Activated T-helper 1 cell treated with anti-CD3 and anti-CD28 coated beads, Interleukin-12 subunit alpha, Interleukin-12 subunit beta, Interleukin-2, Interleukin-4 antibody, amounts not matched to agents 30 ng/mL and 10 ng/mL and 1 ng/mL, durations not matched to agents 14 hours and 24 hours and 36 hours (primary cell): ENCODE measurements at regions of chr1 and their contacts with region 1.

Region 1: DNA sequence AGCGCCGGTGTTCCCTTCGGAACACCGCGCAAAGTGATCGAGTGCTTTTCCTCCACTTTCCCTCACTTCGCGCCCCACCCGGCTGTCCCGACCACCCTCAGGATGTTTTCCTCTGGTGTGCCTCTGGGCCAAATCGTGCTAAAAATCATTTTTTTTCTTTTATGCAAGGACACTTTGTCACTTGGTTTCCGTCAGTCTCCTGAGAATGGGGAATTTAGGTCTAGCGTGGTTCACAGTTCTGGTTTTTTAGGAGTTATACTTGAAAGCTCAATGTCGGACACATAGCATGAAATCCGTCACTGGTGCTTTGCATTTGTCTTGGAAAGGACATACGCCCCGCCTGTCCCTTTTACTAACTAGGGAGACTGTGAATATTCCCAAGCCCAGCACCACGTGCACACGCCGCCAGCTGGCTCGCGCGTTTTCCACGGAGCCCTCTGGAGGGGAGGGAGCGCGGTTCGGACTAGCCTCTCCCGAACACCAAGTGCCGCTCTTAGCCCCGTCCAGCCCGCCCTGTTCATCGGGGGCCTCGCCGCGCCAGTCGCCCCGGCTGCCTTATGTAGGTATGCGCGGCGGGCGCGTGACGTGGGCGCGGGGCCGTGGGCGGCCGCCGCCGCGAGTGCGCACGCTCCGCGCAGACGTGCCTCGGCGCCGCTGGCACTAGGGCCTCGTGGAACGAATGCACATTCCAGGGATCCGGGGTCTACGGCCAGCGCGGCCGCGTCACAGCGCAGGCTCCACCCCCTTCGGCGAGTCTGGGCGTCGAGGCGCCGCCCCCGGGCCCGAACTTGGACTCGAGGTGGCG is 572 bp upstream of the IRF2BP2 start:
- DNase-seq: peak; percentile 90
- H3K4me3 Mint-ChIP-seq: peak overlapping the region; percentile 92
- H3K27ac Mint-ChIP-seq: peak overlapping the region; percentile 99
- H3K4me1 Mint-ChIP-seq: peaks cover 49% of the 10 kb centered on the region
- H3K27me3 Mint-ChIP-seq: no peaks in the 10 kb centered on the region

Region 2: DNA sequence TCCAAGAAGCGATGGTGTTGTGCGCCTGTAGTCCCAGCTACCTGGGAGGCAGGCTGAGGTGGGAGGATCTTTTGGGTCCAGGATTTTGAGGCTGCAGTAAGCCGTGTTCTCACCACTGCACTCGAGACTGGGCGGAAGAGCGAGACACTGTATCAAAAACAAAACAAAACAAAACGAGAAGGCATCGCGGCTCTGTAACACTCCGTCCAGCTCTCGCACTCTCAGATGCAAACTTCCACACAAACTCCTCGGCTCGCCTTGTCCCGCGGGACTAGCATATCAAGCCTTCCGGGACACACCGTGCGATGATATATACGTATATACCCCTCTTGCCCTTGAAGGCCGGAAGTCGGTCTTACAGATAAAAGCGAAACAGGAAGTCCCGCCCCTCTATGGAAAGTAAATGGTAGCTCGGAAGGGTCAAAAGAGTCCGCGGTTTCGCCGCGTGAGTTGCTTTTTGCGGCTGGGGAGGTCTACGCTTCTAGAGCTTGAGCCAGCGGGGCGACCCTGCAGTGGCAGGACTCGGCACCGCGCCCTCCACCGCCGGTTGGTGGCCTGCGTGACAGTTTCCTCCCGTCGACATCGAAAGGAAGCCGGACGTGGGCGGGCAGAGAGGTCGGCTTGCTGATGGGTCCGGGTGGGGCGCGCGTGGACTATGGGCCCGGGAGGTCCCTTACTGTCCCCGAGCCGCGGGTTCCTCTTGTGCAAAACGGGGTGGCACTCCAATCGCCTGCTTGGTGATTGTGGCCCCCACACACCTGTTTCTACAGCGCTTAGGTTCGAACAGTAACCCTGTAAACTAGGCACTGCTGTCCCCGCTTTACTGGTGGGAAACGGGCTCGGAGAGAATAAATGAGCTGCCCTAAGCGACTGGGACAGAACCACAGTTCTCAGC is 237.2 kb before region 1 on chr1 and contains the start of gene COA6:
- intact Hi-C with region 1: loop called (anchors 2 kb)
- DNase-seq: peak; percentile 85
- H3K4me3 Mint-ChIP-seq: peak within 1 kb of the TSS; percentile 97
- H3K27ac Mint-ChIP-seq: peak within 1 kb of the TSS; percentile 96
- H3K4me1 Mint-ChIP-seq: peaks cover 57% of the 10 kb centered on the region
- H3K27me3 Mint-ChIP-seq: peaks cover 2% of the 10 kb centered on the region
- total RNA-seq, gene COA6: 57.2 and 66.9 TPM in 2 replicates

Region 3: GRCh38 chr1:234495211-234495990 is 115.1 kb before region 1 on chr1:
- intact Hi-C with region 1: no loop called
- DNase-seq: no peak
- H3K4me3 Mint-ChIP-seq: peak overlapping the region; percentile 47
- H3K27ac Mint-ChIP-seq: peak overlapping the region; percentile 93
- H3K4me1 Mint-ChIP-seq: peaks cover 76% of the 10 kb centered on the region
- H3K27me3 Mint-ChIP-seq: no peaks in the 10 kb centered on the region

Region 4: DNA sequence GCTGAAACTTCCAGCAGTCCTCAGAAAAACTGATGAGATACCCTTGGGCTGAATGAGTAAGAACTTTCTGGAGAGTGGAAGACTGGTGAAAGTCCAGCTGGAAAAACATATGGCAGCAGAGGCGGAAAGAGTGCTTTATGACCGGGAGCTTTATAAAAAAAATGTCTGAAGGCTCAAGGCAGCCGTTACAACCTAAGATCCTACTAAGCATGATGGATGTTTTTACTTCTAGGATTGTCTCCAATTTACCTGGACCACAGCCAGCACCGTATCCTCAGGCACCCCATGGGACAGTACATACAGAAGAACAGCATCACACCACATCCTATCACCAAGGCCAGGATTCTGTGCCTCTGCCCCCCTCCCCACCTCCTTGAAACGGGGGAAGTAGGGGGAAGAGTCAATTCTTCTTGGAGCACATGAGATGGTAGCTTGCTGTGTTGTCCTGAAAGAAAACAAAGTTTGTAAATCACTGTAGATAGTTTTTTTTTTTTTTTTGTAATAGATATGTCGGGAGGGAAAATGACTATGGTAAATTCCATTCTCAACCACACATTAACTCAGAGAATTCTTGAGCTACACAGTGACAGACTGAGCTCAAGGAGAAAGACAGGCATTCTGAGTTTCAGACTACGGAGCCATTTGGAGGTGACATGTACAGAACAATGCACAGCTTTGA is 11.2 kb after region 1 on chr1:
- intact Hi-C with region 1: no loop called
- DNase-seq: no peak
- H3K4me3 Mint-ChIP-seq: no peak overlapping the region
- H3K27ac Mint-ChIP-seq: no peak overlapping the region
- H3K4me1 Mint-ChIP-seq: peaks cover 14% of the 10 kb centered on the region
- H3K27me3 Mint-ChIP-seq: no peaks in the 10 kb centered on the region

Region 5: DNA sequence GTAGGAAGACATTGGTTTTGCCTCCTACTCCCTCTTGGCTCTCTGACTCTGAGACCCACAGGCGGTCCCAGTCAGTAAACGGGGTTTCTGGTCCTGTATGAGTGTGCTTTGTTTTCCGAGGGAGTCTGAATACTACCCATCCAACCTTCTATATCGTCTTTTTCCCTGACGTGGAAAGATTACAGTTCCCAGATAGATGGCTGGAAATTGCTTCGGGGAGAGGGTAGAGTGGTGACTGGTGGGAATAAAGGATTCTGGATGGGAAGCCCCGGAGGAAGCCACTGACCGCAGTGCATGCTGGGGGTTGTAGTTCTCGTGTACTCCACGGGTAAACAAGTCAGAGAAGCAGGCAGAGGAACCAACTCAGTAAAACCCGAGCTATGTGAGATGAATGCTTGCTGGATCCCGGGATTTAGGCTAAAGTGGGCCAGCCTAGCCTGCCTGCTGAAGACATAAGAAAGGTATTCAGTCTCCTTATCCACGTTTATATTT is 65.6 kb after region 1 on chr1:
- intact Hi-C with region 1: loop called (anchors 2 kb)
- DNase-seq: peak; percentile 40
- H3K4me3 Mint-ChIP-seq: peak overlapping the region; percentile 82
- H3K27ac Mint-ChIP-seq: peak overlapping the region; percentile 71
- H3K4me1 Mint-ChIP-seq: peaks cover 14% of the 10 kb centered on the region
- H3K27me3 Mint-ChIP-seq: peaks cover 5% of the 10 kb centered on the region

Region 6: GRCh38 chr1:234842726-234843641 is 232.4 kb after region 1 on chr1:
- intact Hi-C with region 1: loop called (anchors 1 kb)
- DNase-seq: peak; percentile 67
- H3K4me3 Mint-ChIP-seq: peak overlapping the region; percentile 54
- H3K27ac Mint-ChIP-seq: peak overlapping the region; percentile 90
- H3K4me1 Mint-ChIP-seq: peaks cover 96% of the 10 kb centered on the region
- H3K27me3 Mint-ChIP-seq: peaks cover 3% of the 10 kb centered on the region

Region 7: DNA sequence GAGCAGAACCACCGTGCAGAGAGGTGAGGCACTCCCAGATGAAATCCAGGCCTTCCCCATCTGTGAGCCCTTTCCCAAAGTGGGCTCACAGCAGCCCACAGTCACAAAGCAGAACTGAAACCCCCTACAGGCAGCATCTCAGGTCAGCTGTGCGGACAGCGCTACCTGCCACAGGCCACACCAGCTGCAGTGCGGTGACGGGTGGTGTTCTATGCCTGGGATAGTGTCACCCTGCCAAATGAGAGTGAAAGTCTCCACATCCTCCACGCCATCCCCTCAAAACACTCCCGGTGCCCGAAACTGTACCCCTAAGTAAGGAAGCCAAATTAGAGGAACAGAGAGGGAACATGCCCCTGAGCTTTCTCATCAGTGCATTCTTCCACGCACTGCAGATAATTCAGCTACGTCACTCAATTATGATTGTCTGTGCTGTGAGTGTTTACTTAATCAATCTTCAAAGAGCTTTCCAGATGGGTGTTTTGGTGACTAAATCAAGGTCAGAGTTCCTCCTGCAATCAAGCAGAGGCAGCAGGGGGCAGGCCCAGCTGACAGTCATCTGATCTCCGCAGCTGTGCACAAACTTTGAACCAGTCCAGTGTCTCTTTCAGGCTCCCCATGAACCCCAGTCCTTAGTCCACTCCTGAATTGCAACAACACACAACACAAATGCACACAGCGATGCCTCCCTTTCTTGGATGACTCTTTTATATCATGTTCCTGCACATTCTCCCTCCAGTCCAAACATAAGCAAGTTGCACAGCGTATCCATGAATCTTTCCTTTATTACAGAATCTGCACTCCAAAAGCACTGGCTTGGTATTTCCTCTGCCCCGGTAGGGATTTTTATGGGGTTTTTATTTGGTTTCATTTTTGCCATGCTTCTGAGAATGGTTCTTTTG is 368.1 kb after region 1 on chr1:
- intact Hi-C with region 1: loop called (anchors 1 kb)
- DNase-seq: no peak
- H3K4me3 Mint-ChIP-seq: peak overlapping the region; percentile 83
- H3K27ac Mint-ChIP-seq: peak overlapping the region; percentile 92
- H3K4me1 Mint-ChIP-seq: peaks cover 88% of the 10 kb centered on the region
- H3K27me3 Mint-ChIP-seq: no peaks in the 10 kb centered on the region

Region 8: DNA sequence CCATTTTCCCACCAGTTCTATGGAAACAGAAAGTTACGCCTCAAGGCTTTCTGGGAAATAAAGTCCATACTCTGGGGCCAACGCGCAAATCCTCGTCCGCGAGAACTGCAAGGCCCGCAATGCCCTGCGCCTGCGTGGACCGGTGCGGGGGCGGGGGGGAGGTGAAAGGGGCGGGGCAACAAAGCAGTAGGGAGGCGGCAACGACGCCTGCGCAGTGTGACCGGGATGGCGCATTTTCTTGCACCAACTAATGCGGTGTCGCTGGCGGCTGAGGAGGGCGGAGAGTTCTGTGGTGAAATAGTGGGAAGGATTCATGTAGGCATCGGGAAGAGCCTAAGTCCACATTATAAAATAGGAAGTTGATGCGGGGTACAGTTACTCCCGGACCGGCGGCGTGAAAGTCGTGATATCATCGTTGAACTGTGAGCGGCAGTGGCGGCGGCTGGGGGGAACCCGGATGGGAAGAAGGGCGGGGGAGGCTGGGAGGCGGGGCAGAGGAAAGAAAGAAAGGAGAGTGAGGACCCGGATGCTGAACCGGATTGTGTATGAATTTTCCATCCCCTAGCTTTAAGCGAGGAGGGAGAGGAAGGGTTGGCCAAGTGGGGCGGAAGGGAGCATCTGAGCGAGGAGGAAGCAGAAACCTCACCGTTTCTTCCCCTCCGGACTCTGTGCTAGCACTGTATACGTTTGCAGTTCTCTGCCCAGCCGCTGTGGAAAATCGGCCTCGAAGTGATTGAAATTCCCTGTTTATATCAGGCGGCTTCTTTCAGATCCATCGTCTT is 718.0 kb after region 1 on chr1 and contains the start of gene GGPS1:
- intact Hi-C with region 1: loop called (anchors 1 kb)
- DNase-seq: peak; percentile 94
- H3K4me3 Mint-ChIP-seq: no peak within 1 kb of the TSS
- H3K27ac Mint-ChIP-seq: no peak within 1 kb of the TSS
- H3K4me1 Mint-ChIP-seq: peaks cover 28% of the 10 kb centered on the region
- H3K27me3 Mint-ChIP-seq: no peaks in the 10 kb centered on the region
- total RNA-seq, gene GGPS1: 28.8 and 29.8 TPM in 2 replicates